Aorta (tissue), 5 donors: ENCODE measurements at regions of chr18 and their contacts with region 1.

Region 1: DNA sequence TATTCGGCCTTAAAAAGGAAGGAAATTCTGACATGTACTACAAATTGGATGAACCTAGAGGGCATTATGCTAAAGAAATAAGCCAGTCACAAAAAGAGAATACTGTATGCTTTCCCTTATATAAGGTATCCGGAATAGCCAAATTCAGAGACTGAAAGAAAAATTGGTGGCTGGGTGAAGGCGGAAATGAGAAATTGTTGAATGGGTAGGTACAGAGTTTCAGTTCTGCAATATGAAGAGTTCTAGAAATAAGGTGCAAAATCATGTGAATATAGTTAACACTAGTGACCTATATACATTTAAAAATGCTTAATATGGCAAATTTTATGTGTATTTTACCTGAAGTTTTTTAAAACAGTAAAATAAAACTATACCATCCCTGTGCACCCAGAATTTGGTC is 43.1 kb downstream of the RMP24 start:
- DNase-seq: no peak
- ATAC-seq: no peak
- H3K4me3 ChIP-seq: no peak overlapping the region
- H3K27ac ChIP-seq: no peak overlapping the region
- H3K4me1 ChIP-seq: no peaks in the 10 kb centered on the region
- H3K27me3 ChIP-seq: no peaks in the 10 kb centered on the region

Region 2: GRCh38 chr18:36129300-36130038 is 113.8 kb after region 1 on chr18 and contains the starts of genes ELP2 and SLC39A6:
- intact Hi-C with region 1: loop called in 1 of 2 experiments (anchors 10 kb)
- DNase-seq: peak; percentile 98
- ATAC-seq: peak; percentile 99
- H3K4me3 ChIP-seq: peak within 1 kb of the TSS; percentile 58 to 71
- H3K27ac ChIP-seq: peak within 1 kb of the TSS; percentile 81 to 89
- H3K4me1 ChIP-seq: peaks cover 0 to 2% of the 10 kb centered on the region in 2 donors
- H3K27me3 ChIP-seq: no peaks in the 10 kb centered on the region
- total RNA-seq, gene ELP2: 62.6 to 84.3 TPM
- total RNA-seq, gene SLC39A6: 29.6 to 39.4 TPM